ENCODE measurements at regions of chr16 and their contacts with region 1.

Region 1: GRCh38 chr16:67461600-67462592 is 19.1 kb downstream of the ATP6V0D1 start:
- DNase-seq: no peak
- H3K4me3 ChIP-seq: no peak overlapping the region
- H3K27ac ChIP-seq: no peak overlapping the region
- H3K4me1 ChIP-seq: peaks cover 36 to 51% of the 10 kb centered on the region in 2 donors
- H3K27me3 ChIP-seq: no peaks in the 10 kb centered on the region
- CTCF ChIP-seq: no peak

Region 2: DNA sequence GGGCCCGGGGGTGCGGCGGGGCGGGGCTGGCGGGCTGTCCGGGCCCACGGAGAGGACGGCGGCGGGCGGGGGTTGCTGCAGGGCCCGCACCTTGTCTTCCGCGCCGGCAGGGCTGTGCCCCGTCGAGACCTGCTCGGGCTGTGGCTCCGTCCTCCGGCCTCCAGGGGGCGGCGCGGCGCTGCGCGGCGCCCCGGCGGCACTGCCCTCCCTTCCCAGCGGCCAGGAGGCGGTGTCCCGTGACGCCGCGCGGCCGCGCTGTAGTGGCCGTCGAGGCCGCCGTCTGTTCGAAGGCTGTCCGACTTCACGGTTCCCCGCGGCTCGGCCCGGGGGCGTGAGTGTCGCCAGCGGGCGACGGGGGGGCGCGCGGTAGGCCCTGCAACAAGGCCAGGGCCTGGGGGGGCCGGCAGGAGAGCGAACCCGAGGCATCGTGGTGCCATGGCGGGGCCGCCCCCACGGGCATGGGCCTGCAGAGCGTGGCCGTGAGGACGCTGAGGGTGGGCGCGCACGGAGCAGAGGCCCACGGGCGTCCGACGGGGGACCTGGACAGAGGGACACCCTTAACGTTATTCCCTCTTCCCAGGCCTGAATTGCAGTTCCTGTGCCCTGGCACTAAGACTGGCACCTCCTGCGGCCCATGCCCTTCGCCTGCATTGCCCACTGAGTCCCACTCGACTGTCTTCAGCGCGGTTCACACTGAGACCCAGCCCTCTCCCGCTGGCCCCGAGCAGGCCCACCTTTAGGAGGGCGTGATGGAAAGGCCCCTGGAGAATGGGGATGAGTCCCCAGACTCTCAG is 182.4 kb before region 1 on chr16 and contains the start of gene PLEKHG4:
- intact Hi-C with region 1: loop called (anchors 2 kb)
- DNase-seq: peak; percentile 29 to 78
- H3K4me3 ChIP-seq: peak within 1 kb of the TSS; percentile 54 to 67
- H3K27ac ChIP-seq: peak within 1 kb of the TSS; percentile 79 to 82
- H3K4me1 ChIP-seq: peaks cover 3 to 15% of the 10 kb centered on the region in 2 donors
- H3K27me3 ChIP-seq: no peaks in the 10 kb centered on the region
- CTCF ChIP-seq: peak; percentile 25 to 84 (median 47)
- total RNA-seq, gene PLEKHG4: 3.7 TPM

Region 3: DNA sequence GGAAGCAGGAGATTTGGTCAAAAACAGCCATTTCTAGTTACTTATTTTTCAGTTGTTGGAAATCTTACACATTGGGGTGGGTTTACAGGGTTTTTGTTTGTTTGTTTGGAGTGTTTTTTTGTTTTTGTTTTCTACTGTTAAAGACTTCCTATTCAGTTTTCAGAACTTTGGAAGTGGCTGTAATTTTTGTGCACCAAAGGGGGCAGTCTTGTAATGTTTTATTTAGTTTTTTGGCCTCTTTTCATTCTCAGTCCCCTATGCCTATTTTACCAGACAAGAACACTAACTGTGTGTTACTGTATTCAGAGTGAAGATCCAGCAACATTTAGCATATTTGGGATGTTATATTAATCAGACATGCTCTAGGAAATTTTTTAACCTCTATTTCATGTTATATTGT is 89.2 kb before region 1 on chr16:
- intact Hi-C with region 1: loop called (anchors 10 kb)
- DNase-seq: no peak
- H3K4me3 ChIP-seq: no peak overlapping the region
- H3K27ac ChIP-seq: no peak overlapping the region
- H3K4me1 ChIP-seq: no peaks in the 10 kb centered on the region
- H3K27me3 ChIP-seq: no peaks in the 10 kb centered on the region
- CTCF ChIP-seq: peak in 2 of 3 experiments; percentile 13 to 52

Region 4: GRCh38 chr16:67504041-67505021 is 42.4 kb after region 1 on chr16:
- intact Hi-C with region 1: no loop called
- DNase-seq: peak in 1 of 2 donors; percentile 39
- H3K4me3 ChIP-seq: no peak overlapping the region
- H3K27ac ChIP-seq: no peak overlapping the region
- H3K4me1 ChIP-seq: no peaks in the 10 kb centered on the region
- H3K27me3 ChIP-seq: no peaks in the 10 kb centered on the region
- CTCF ChIP-seq: no peak

Measured in ascending aorta (tissue), 2 donors.